Activated CD8-positive, alpha-beta T cell treated with anti-CD3 and anti-CD28 coated beads, Interleukin-2, amount 10 ng/mL, durations not matched to agents 7 days and 5 days (primary cell): ENCODE measurements at regions of chr6 and their contacts with region 1.

Region 1: DNA sequence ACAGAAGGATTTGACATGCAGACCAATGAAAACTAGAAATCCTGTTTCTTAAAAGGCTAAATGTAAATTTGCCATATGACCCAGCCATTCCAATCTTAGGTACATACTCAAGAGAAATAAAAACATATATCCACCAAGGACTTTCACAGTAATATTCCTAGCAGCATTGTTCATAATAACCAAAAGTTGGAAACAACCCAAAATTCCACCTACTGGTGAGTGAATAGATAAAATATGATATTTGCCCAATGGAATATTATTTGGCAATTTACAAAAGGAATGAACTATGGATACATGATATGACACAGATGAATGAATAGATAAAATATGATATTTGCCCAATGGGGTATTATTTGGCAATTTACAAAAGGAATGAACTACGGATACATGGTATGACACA is 22.7 kb downstream of the MTCL3 start:
- DNase-seq: no peak
- ATAC-seq: no peak
- H3K4me3 Mint-ChIP-seq: no peak overlapping the region
- H3K27ac Mint-ChIP-seq: no peak overlapping the region
- H3K4me1 Mint-ChIP-seq: peaks cover 10% of the 10 kb centered on the region
- H3K27me3 Mint-ChIP-seq: peaks cover 6% of the 10 kb centered on the region

Region 2: DNA sequence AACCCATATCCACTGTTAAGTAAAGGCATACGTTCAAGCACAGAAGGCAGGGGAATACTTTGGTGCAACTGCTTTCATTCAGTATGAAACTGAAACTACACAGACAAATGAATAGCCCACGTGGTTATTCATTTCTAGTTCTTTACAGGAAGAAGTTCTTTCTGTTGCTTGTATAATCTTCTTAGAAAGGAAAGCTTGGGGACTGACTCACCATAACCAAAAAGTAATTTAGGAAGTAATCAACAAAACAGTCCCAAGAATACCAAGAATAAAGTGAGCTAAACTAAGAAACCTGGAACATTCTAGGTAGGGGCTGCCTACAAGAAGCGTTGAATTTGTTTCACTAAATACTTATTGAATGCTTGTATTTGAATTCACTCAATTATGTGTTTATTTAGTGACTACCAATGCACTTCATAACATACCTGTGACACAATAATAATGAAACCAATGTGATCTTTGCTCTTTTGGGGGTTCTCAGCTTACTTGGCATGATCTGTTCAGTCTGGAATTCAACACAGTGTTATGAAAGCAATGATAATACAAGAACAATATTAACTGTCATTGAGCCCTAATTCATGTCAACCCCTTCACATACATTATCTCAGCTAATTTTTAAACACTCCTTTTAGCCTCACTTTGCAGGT is 12.1 kb before region 1 on chr6:
- CTCF ChIA-PET with region 1: interaction called, 11 read pairs
- POLR2A ChIA-PET with region 1: no interaction called
- DNase-seq: peak; percentile 24
- ATAC-seq: peak; percentile 98
- H3K4me3 Mint-ChIP-seq: peak overlapping the region; percentile 54
- H3K27ac Mint-ChIP-seq: peak overlapping the region; percentile 87
- H3K4me1 Mint-ChIP-seq: peaks cover 36% of the 10 kb centered on the region
- H3K27me3 Mint-ChIP-seq: no peaks in the 10 kb centered on the region